Gastrocnemius medialis (tissue), 4 donors: ENCODE measurements at regions of chr3 and their contacts with region 1.

Region 1: GRCh38 chr3:148971401-148972163 is 19.8 kb upstream of the GYG1 start:
- DNase-seq: no peak
- ATAC-seq: no peak
- H3K4me3 ChIP-seq: no peak overlapping the region
- H3K27ac ChIP-seq: no peak overlapping the region
- H3K4me1 ChIP-seq: peaks cover 13 to 17% of the 10 kb centered on the region in 2 donors
- H3K27me3 ChIP-seq: no peaks in the 10 kb centered on the region
- CTCF ChIP-seq: no peak
- POLR2A ChIP-seq: no peak

Region 2: GRCh38 chr3:148991194-148992026 is 19.8 kb after region 1 on chr3 and contains the start of gene GYG1:
- in situ Hi-C with region 1: no loop called
- intact Hi-C with region 1: loop called (anchors 2 kb)
- DNase-seq: peak; percentile 81 to 89
- ATAC-seq: peak; percentile 74 to 75
- H3K4me3 ChIP-seq: peak within 1 kb of the TSS; percentile 77 to 99 (median 96)
- H3K27ac ChIP-seq: peak within 1 kb of the TSS; percentile 98 to 100 (median 100)
- H3K4me1 ChIP-seq: peaks cover 17 to 25% of the 10 kb centered on the region in 2 donors
- H3K27me3 ChIP-seq: no peaks in the 10 kb centered on the region
- CTCF ChIP-seq: peak in 4 of 5 experiments; percentile 23 to 53 (median 35)
- POLR2A ChIP-seq: peak; percentile 98 to 99
- total RNA-seq, gene GYG1: 298 to 526 (median 331) TPM

Region 3: GRCh38 chr3:149016669-149017541 is 45.3 kb after region 1 on chr3:
- in situ Hi-C with region 1: loop called in 1 of 4 experiments (anchors 10 kb)
- intact Hi-C with region 1: loop called (anchors 1 kb)
- DNase-seq: peak in 1 of 2 donors; percentile 45
- ATAC-seq: peak; percentile 73 to 76
- H3K4me3 ChIP-seq: peak overlapping the region in 1 of 4 donors; percentile 5
- H3K27ac ChIP-seq: peak overlapping the region; percentile 98 to 100 (median 100)
- H3K4me1 ChIP-seq: peaks cover 85 to 88% of the 10 kb centered on the region in 2 donors
- H3K27me3 ChIP-seq: no peaks in the 10 kb centered on the region
- CTCF ChIP-seq: no peak
- POLR2A ChIP-seq: peak in 1 of 2 donors; percentile 67

Region 4: DNA sequence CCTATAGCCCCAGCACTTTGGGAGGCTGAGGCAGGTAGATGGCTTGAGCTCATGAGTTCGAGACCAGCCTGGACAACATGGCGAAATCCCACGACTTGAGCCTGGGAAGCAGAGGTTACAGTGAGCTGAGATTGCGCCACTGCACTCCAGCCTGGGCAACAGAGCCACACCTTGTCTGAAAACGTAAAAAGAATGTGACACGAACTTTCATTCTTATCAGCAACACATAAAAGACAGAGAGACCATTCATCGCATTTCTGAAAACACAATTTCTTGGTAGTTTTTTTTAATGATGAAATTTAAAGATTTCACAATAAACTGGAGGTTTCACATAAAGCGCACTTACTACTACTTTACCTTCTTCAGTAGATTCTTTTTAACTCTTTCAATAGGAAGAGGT is 96.3 kb after region 1 on chr3:
- in situ Hi-C with region 1: no loop called
- intact Hi-C with region 1: no loop called
- DNase-seq: no peak
- ATAC-seq: no peak
- H3K4me3 ChIP-seq: no peak overlapping the region
- H3K27ac ChIP-seq: no peak overlapping the region
- H3K4me1 ChIP-seq: no peaks in the 10 kb centered on the region
- H3K27me3 ChIP-seq: no peaks in the 10 kb centered on the region
- CTCF ChIP-seq: no peak
- POLR2A ChIP-seq: no peak